ENCODE measurements at regions of chr3 and their contacts with region 1.

Region 1: DNA sequence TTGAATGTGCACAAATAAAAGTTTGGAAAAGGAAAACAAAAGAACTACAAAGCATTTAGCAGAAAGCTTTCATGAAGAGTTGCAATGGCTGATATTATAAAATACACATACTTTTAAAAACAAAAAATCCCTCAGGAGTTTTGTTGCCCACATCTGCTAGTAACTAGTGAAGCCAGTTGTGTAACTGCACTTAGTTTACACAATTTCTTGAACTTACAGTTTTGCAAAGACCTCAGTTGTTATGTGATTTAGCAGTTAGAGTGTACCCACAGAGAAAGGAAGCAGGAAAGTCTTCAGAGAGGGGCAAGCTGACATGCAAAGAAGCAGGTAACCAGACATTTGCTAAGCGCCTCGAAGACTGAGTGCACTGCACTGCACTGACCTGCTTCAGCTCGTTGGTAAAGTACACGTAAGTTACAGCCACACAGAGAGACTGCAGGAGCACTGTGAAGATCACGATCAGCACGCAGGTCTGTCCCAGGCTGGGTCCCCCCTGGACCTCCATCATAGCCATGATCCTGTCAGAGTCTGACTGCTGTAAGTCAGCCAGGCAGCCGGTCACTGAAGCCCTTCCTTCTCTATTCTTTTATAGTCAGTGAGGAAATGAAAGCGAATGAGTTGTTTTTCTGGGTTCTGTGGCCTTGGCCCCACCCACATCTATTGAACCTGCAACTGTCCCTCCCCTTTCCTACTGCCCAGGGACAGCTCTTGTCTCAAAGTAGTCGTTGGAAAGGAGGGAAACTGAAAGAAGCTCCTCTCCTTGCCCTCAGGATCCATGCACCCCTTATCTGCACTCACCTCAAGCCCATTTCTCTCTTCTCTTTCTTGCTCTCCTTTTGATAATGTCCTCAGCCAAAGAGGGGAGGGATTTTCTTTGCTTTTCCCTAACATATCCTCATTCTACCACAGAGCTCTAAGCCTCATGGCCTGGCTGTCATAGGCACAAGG is at the start of gene TNFSF10:
- DNase-seq: peak; percentile 91
- H3K4me3 ChIP-seq: peak within 1 kb of the TSS in 2 of 3 experiments; percentile 34 to 67
- H3K27ac ChIP-seq: no peak within 1 kb of the TSS
- H3K4me1 ChIP-seq: peaks cover 20% of the 10 kb centered on the region
- H3K27me3 ChIP-seq: no peaks in the 10 kb centered on the region
- CTCF ChIP-seq: no peak
- POLR2A ChIP-seq: peak; percentile 54
- total RNA-seq, gene TNFSF10: 18.5 and 31.2 TPM in 2 replicates

Region 2: GRCh38 chr3:172367205-172368105 is 155.7 kb before region 1 on chr3:
- CTCF ChIA-PET with region 1: no interaction called
- POLR2A ChIA-PET with region 1: no interaction called
- dilution Hi-C with region 1: no loop called
- intact Hi-C with region 1: no loop called
- DNase-seq: peak; percentile 69
- H3K4me3 ChIP-seq: no peak overlapping the region
- H3K27ac ChIP-seq: no peak overlapping the region
- H3K4me1 ChIP-seq: no peaks in the 10 kb centered on the region
- H3K27me3 ChIP-seq: no peaks in the 10 kb centered on the region
- CTCF ChIP-seq: no peak
- POLR2A ChIP-seq: no peak

Region 3: DNA sequence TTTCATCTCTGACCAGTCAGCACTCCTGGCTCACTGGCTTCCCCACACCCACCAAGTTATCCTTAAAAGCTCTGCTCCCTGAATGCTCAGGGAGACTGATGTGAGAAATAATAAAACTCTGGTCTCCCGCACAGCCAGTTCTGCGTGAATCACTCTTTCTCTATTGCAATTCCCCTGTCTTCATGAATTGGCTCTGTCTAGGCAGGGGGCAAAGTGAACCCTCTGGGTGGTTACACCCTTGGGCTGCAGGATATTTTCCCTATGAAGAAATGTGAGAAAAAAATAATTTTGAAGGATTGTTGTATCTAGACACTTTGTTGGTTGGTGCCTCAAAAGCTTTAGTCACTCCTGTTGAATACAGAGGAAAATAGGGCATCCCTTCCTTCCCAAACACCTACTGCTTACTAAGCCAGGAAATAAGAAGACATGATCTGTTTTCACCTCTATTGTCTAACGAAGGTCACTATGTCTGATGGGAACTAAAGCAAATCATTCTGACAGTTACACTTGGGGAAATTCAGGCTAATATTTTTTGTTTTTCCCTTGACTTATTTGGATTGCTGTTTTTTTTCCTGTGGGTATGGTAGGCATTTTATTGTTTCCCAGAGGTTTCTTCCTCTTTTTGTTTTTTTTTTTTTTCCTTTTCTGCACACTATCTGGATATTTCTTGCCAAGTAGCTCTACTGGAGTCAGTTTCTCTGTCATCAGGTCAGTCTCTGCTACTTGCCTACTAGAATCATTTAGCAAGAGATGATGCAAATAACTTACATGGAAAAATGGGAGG is 15.4 kb after region 1 on chr3:
- CTCF ChIA-PET with region 1: interaction called, 5 read pairs
- POLR2A ChIA-PET with region 1: no interaction called
- dilution Hi-C with region 1: no loop called
- intact Hi-C with region 1: loop called (anchors 2 kb)
- DNase-seq: peak; percentile 71
- H3K4me3 ChIP-seq: no peak overlapping the region
- H3K27ac ChIP-seq: no peak overlapping the region
- H3K4me1 ChIP-seq: peaks cover 14% of the 10 kb centered on the region
- H3K27me3 ChIP-seq: no peaks in the 10 kb centered on the region
- CTCF ChIP-seq: no peak
- POLR2A ChIP-seq: no peak

Region 4: DNA sequence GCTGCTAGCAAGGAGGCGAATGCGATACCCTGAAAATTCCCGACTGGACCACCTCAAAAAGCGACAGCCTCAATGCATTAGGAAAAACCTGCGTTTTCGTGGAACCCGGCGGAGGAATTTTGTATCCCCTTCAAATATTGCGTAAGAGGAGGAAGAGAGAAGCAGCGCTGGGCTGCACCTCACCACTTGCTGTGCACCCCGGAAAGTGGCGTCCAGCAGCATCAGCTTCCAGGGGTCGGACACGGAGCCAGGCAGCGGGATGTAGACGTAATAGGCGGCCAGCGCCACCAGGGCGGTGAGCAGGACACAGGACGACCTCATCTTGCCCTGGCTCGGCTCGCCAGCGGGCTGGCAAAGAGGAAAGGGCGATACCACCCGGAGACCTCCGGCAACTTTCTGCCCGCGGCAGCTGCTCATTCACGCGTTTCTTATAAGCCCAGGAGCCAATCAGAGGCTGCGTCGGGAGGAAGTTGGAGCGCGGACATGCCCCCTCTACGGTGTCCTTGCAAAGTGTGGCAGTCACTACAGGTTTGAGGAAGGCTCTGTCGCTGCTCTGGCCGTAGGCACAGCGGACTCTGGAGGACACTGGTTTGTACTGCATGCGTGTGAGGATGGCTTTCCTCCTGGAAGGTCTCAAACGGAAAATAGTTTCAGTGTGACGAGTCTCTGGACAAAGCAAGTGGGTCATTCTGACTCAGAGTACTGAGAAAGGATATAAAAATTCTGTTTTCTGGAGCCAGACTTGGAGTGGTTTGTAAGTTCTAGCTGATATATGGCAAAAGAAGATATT is 187.7 kb after region 1 on chr3 and contains the start of gene NCEH1:
- CTCF ChIA-PET with region 1: no interaction called
- POLR2A ChIA-PET with region 1: no interaction called
- dilution Hi-C with region 1: no loop called
- intact Hi-C with region 1: no loop called
- DNase-seq: peak; percentile 98
- H3K4me3 ChIP-seq: peak within 1 kb of the TSS; percentile 36 to 79 (median 75)
- H3K27ac ChIP-seq: peak within 1 kb of the TSS; percentile 88
- H3K4me1 ChIP-seq: peaks cover 26% of the 10 kb centered on the region
- H3K27me3 ChIP-seq: no peaks in the 10 kb centered on the region
- CTCF ChIP-seq: peak; percentile 75 to 88
- POLR2A ChIP-seq: peak; percentile 99
- total RNA-seq, gene NCEH1: 20.3 and 20.5 TPM in 2 replicates

Region 5: GRCh38 chr3:172980849-172981248 is 457.7 kb after region 1 on chr3:
- CTCF ChIA-PET with region 1: no interaction called
- POLR2A ChIA-PET with region 1: no interaction called
- dilution Hi-C with region 1: no loop called
- intact Hi-C with region 1: no loop called
- DNase-seq: peak; percentile 9
- H3K4me3 ChIP-seq: no peak overlapping the region
- H3K27ac ChIP-seq: no peak overlapping the region
- H3K4me1 ChIP-seq: no peaks in the 10 kb centered on the region
- H3K27me3 ChIP-seq: no peaks in the 10 kb centered on the region
- CTCF ChIP-seq: no peak
- POLR2A ChIP-seq: no peak

Measured in endothelial cell of umbilical vein (primary cell).